Endothelial cell of umbilical vein (primary cell): ENCODE measurements at regions of chr5 and their contacts with region 1.

Region 1: GRCh38 chr5:147530530-147531389 is 20.9 kb upstream of the DPYSL3 start:
- DNase-seq: peak; percentile 85
- H3K4me3 ChIP-seq: peak overlapping the region in 1 of 3 experiments; percentile 22
- H3K27ac ChIP-seq: peak overlapping the region; percentile 69
- H3K4me1 ChIP-seq: peaks cover 33% of the 10 kb centered on the region
- H3K27me3 ChIP-seq: no peaks in the 10 kb centered on the region
- CTCF ChIP-seq: no peak
- POLR2A ChIP-seq: no peak

Region 2: DNA sequence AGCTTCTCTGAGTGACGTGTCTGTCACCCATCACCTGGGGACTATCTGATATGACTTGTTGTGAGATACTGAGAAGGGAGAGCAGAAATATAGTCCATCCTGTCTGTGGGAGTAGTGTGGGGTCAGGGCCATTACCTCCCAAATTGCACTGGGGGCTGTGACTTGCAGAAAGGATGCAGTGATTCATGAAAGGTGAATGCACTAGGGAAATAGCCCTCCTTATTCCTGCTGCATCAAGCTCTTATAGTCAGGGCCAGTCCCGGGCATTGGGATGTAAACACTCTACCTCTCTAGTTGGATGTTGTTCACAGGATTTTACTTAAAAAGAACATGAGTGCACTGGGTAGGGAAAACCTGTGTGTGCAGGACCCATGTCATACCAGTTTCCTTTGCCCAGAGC is 171.2 kb before region 1 on chr5:
- CTCF ChIA-PET with region 1: no interaction called
- POLR2A ChIA-PET with region 1: no interaction called
- dilution Hi-C with region 1: no loop called
- intact Hi-C with region 1: no loop called
- DNase-seq: no peak
- H3K4me3 ChIP-seq: no peak overlapping the region
- H3K27ac ChIP-seq: no peak overlapping the region
- H3K4me1 ChIP-seq: no peaks in the 10 kb centered on the region
- H3K27me3 ChIP-seq: peaks cover 0 to 11% of the 10 kb centered on the region in 2 experiments
- CTCF ChIP-seq: no peak
- POLR2A ChIP-seq: no peak

Region 3: GRCh38 chr5:147464211-147464610 is 66.5 kb before region 1 on chr5:
- CTCF ChIA-PET with region 1: interaction called, 13 read pairs
- POLR2A ChIA-PET with region 1: no interaction called
- dilution Hi-C with region 1: no loop called
- intact Hi-C with region 1: loop called (anchors 1 kb)
- DNase-seq: peak; percentile 81
- H3K4me3 ChIP-seq: no peak overlapping the region
- H3K27ac ChIP-seq: no peak overlapping the region
- H3K4me1 ChIP-seq: peaks cover 10% of the 10 kb centered on the region
- H3K27me3 ChIP-seq: no peaks in the 10 kb centered on the region
- CTCF ChIP-seq: peak; percentile 55 to 61
- POLR2A ChIP-seq: no peak

Region 4: GRCh38 chr5:147517383-147517782 is 13.4 kb before region 1 on chr5:
- CTCF ChIA-PET with region 1: interaction called, 6 read pairs
- POLR2A ChIA-PET with region 1: no interaction called
- dilution Hi-C with region 1: no loop called
- intact Hi-C with region 1: loop called (anchors 1 kb)
- DNase-seq: no peak
- H3K4me3 ChIP-seq: no peak overlapping the region
- H3K27ac ChIP-seq: no peak overlapping the region
- H3K4me1 ChIP-seq: peaks cover 21% of the 10 kb centered on the region
- H3K27me3 ChIP-seq: no peaks in the 10 kb centered on the region
- CTCF ChIP-seq: no peak
- POLR2A ChIP-seq: no peak